ENCODE measurements at regions of chr15 and their contacts with region 1.

Region 1: DNA sequence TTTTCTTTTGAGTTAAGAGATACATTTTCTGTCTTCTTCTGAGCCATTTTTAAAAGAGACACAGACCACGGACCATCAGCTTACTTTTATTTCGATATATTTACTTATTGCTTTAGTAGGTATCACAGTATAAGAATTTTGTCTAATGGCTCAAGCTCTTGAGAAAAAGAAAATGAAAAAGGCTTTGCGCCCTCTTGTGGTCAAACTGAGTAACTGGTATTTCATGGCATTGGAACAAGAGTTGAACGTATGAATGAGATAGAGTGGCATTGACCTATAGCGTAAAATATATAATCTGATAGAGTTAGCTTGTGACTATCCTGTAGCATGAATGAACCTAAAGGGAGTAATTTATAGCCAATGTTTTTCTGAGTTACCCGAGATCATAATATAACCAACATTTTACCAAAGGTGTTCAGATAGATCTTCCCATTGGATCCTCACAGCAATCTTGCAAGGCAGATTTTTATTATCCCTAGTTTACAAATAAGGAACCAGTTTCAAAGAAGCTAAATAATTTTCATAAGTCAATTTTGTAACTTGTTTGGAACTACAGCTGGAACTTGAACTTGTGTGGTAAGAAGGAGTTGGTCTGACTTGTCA is 154.6 kb downstream of the POLR2M start:
- DNase-seq: no peak
- H3K4me3 ChIP-seq: no peak overlapping the region
- H3K27ac ChIP-seq: no peak overlapping the region
- H3K4me1 ChIP-seq: peaks cover 0 to 6% (median 0%) of the 10 kb centered on the region in 6 donors
- H3K27me3 ChIP-seq: no peaks in the 10 kb centered on the region
- CTCF ChIP-seq: peak; percentile 40 to 86 (median 77)
- POLR2A ChIP-seq: no peak

Region 2: GRCh38 chr15:57561041-57561711 is 300.0 kb before region 1 on chr15:
- intact Hi-C with region 1: loop called (anchors 5 kb)
- DNase-seq: peak; percentile 84
- H3K4me3 ChIP-seq: peak overlapping the region in 1 of 8 donors; percentile 28
- H3K27ac ChIP-seq: peak overlapping the region in 7 of 8 donors; percentile 30 to 70 (median 61)
- H3K4me1 ChIP-seq: peaks cover 0 to 27% (median 17%) of the 10 kb centered on the region in 6 donors
- H3K27me3 ChIP-seq: peaks cover 0 to 22% (median 0%) of the 10 kb centered on the region in 7 donors
- CTCF ChIP-seq: peak; percentile 70 to 90 (median 88)
- POLR2A ChIP-seq: no peak

Region 3: GRCh38 chr15:57635300-57635909 is 225.7 kb before region 1 on chr15:
- intact Hi-C with region 1: no loop called
- DNase-seq: no peak
- H3K4me3 ChIP-seq: no peak overlapping the region
- H3K27ac ChIP-seq: peak overlapping the region in 7 of 8 donors; percentile 13 to 71 (median 46)
- H3K4me1 ChIP-seq: peaks cover 0 to 4% (median 0%) of the 10 kb centered on the region in 6 donors
- H3K27me3 ChIP-seq: no peaks in the 10 kb centered on the region
- CTCF ChIP-seq: peak in 3 of 11 experiments; percentile 10 to 39 (median 17)
- POLR2A ChIP-seq: no peak

Region 4: GRCh38 chr15:57751177-57751800 is 109.8 kb before region 1 on chr15:
- intact Hi-C with region 1: loop called (anchors 10 kb)
- DNase-seq: no peak
- H3K4me3 ChIP-seq: no peak overlapping the region
- H3K27ac ChIP-seq: no peak overlapping the region
- H3K4me1 ChIP-seq: peaks cover 0 to 9% (median 0%) of the 10 kb centered on the region in 6 donors
- H3K27me3 ChIP-seq: no peaks in the 10 kb centered on the region
- CTCF ChIP-seq: peak in 9 of 11 experiments; percentile 17 to 51 (median 34)
- POLR2A ChIP-seq: no peak

Region 5: GRCh38 chr15:58282060-58282708 is 421.0 kb after region 1 on chr15:
- intact Hi-C with region 1: no loop called
- DNase-seq: no peak
- H3K4me3 ChIP-seq: no peak overlapping the region
- H3K27ac ChIP-seq: no peak overlapping the region
- H3K4me1 ChIP-seq: no peaks in the 10 kb centered on the region
- H3K27me3 ChIP-seq: no peaks in the 10 kb centered on the region
- CTCF ChIP-seq: no peak
- POLR2A ChIP-seq: no peak

Measured in spleen (tissue), 13 donors.